ENCODE measurements at regions of chr3 and their contacts with region 1.

Region 1: GRCh38 chr3:129016356-129016719 is 15.2 kb downstream of the EFCC1 start:
- DNase-seq: peak; percentile 80
- H3K4me3 Mint-ChIP-seq: peak overlapping the region; percentile 62
- H3K27ac Mint-ChIP-seq: peak overlapping the region; percentile 93
- H3K4me1 Mint-ChIP-seq: peaks cover 34% of the 10 kb centered on the region
- H3K27me3 Mint-ChIP-seq: no peaks in the 10 kb centered on the region

Region 2: GRCh38 chr3:128879125-128879969 is 137.0 kb before region 1 on chr3 and contains the start of gene ACAD9:
- CTCF ChIA-PET with region 1: interaction called, 4 read pairs
- POLR2A ChIA-PET with region 1: no interaction called
- intact Hi-C with region 1: loop called (anchors 5 kb)
- DNase-seq: peak; percentile 98
- H3K4me3 Mint-ChIP-seq: peak within 1 kb of the TSS; percentile 93
- H3K27ac Mint-ChIP-seq: peak within 1 kb of the TSS; percentile 95
- H3K4me1 Mint-ChIP-seq: peaks cover 61% of the 10 kb centered on the region
- H3K27me3 Mint-ChIP-seq: no peaks in the 10 kb centered on the region
- total RNA-seq, gene ACAD9: 45.3 to 45.5 TPM

Region 3: DNA sequence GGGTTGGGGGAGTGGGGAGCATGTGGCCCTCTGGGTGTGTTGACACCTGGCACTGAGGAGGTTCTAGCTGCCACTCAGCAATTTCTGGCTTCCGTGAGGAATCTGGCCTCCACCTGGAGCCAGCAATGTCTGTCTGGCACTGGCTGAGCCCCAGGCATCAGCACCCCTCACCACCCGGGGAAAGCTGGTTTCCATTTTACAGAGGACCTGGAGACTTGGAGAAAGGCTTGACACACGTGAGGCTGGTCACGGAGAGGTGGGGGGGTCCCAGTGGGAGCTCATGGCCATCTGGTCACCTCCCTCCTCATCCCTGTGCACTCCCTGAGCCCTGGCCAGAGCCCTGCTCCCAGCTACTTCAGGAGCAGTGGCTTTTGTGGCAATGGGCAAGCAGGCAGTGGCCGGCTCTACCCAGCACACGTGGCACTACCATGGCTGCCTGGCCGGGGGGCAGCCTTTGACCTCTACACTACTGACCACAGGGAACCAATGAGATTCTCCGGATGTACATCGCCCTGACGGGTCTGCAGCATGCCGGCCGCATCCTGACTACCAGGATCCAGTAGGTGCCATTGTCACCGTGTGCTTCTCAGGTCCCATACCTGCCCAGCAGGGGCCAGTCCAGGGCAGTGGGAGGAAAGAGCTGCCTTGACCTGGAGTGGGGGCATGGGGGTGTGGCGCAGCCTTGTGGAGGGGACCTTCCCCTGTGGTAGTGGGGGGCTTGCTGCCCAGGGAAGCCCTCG is 108.5 kb before region 1 on chr3:
- CTCF ChIA-PET with region 1: no interaction called
- POLR2A ChIA-PET with region 1: no interaction called
- intact Hi-C with region 1: no loop called
- DNase-seq: no peak
- H3K4me3 Mint-ChIP-seq: no peak overlapping the region
- H3K27ac Mint-ChIP-seq: no peak overlapping the region
- H3K4me1 Mint-ChIP-seq: no peaks in the 10 kb centered on the region
- H3K27me3 Mint-ChIP-seq: no peaks in the 10 kb centered on the region

Region 4: GRCh38 chr3:129003578-129004160 is 12.7 kb before region 1 on chr3:
- CTCF ChIA-PET with region 1: interaction called, 21 read pairs
- POLR2A ChIA-PET with region 1: interaction called, 9 read pairs
- intact Hi-C with region 1: no loop called
- DNase-seq: peak; percentile 63
- H3K4me3 Mint-ChIP-seq: peak overlapping the region; percentile 16
- H3K27ac Mint-ChIP-seq: no peak overlapping the region
- H3K4me1 Mint-ChIP-seq: peaks cover 25% of the 10 kb centered on the region
- H3K27me3 Mint-ChIP-seq: peaks cover 27% of the 10 kb centered on the region

Region 5: GRCh38 chr3:129052675-129053074 is 36.3 kb after region 1 on chr3:
- CTCF ChIA-PET with region 1: interaction called, 34 read pairs
- POLR2A ChIA-PET with region 1: no interaction called
- intact Hi-C with region 1: no loop called
- DNase-seq: no peak
- H3K4me3 Mint-ChIP-seq: no peak overlapping the region
- H3K27ac Mint-ChIP-seq: no peak overlapping the region
- H3K4me1 Mint-ChIP-seq: peaks cover 8% of the 10 kb centered on the region
- H3K27me3 Mint-ChIP-seq: no peaks in the 10 kb centered on the region

Region 6: DNA sequence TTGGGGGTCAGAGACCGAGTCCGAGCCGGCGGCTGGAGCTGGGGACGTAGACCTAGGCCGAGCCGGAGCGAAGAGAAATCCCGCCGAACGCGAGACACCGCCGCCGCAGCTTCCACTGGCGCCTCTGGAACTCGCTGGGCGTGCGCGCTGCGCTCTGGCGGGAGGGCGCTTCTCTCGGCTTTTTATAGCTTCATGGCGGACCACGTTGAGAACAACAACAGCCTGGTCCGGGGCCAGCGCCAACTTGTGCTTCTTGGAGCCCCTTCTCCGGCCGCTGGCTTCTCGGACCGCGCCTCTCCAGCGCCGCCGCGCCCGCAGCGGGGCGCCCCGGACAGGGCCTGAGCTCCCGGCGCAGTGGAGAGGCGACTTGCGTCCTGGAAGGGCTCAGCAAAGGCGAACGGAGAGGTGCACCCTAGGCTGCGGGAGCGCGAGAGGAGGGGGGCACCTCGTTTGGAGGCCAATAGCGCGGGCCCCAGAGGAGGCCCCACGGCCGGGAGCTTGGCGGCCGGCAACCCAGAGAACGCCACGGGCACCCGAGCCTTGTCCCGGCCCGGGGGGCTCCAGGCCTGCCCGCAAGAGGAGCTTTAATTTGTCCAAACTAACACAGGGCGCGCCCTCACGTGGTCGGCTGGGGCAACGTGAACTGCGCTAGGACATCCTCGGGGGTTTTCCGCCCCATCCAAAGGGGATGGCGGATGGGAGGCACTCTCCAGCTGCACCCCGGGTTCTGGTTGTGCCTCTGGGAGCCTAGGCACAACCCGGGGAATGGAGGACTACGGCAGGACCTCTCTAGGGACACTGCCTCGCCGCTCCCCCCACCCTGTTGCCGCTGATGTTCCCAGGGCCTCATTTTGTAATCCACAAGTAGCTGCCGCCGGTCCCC is 300.0 kb after region 1 on chr3:
- CTCF ChIA-PET with region 1: no interaction called
- POLR2A ChIA-PET with region 1: interaction called, 13 read pairs
- intact Hi-C with region 1: no loop called
- DNase-seq: peak; percentile 90
- H3K4me3 Mint-ChIP-seq: peak overlapping the region; percentile 93
- H3K27ac Mint-ChIP-seq: peak overlapping the region; percentile 89
- H3K4me1 Mint-ChIP-seq: peaks cover 26% of the 10 kb centered on the region
- H3K27me3 Mint-ChIP-seq: no peaks in the 10 kb centered on the region

Region 7: GRCh38 chr3:129975038-129975704 is 958.8 kb after region 1 on chr3:
- CTCF ChIA-PET with region 1: no interaction called
- POLR2A ChIA-PET with region 1: no interaction called
- intact Hi-C with region 1: no loop called
- DNase-seq: peak; percentile 33
- H3K4me3 Mint-ChIP-seq: peak overlapping the region; percentile 62
- H3K27ac Mint-ChIP-seq: no peak overlapping the region
- H3K4me1 Mint-ChIP-seq: peaks cover 7% of the 10 kb centered on the region
- H3K27me3 Mint-ChIP-seq: peaks cover 48% of the 10 kb centered on the region

Measured in activated CD4-positive, alpha-beta memory T cell treated with anti-CD3 and anti-CD28 coated beads for 36 hours (primary cell).